ENCODE measurements at regions of chr12 and their contacts with region 1.

Region 1: GRCh38 chr12:30725739-30726138 is 29.0 kb downstream of the CAPRIN2 start:
- DNase-seq: peak; percentile 57
- H3K4me3 ChIP-seq: no peak overlapping the region
- H3K27ac ChIP-seq: no peak overlapping the region
- H3K4me1 ChIP-seq: no peaks in the 10 kb centered on the region
- H3K27me3 ChIP-seq: no peaks in the 10 kb centered on the region
- CTCF ChIP-seq: no peak

Region 2: DNA sequence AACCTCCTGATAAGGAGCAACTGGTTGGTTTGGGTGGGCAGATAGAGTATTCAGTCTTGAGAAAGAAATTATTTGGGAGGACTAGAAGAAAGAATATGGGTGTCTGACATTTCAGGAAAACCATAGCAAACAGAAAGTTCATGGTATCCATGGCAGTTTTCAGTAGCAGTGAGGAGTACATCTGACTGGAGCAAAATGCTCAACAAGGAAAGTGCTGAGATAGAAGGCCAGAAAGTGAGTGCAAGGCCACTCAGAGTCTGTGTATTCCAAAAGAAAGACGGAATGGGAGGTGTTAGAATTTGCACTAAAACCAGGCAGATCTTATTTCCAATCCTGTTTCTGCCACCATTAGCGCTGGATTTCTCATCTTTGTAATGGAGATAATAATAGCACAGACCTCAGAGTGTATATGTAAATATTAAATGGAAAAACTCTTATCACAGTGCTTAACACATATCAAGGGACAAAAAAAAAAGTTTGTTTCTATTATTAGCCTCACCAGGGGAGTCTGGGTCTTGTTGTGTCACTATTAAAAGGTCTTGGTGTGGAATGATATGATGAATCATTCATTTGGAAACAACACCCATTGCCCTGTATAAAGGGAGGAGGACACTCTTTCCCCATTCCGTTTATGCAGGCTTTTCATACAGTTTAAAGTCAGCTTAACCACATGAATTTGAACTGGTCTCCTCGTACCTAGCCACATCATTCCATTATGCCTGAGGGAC is 379.8 kb before region 1 on chr12:
- CTCF ChIA-PET with region 1: no interaction called
- dilution Hi-C with region 1: no loop called
- in situ Hi-C with region 1: no loop called
- intact Hi-C with region 1: no loop called
- DNase-seq: no peak
- H3K4me3 ChIP-seq: no peak overlapping the region
- H3K27ac ChIP-seq: no peak overlapping the region
- H3K4me1 ChIP-seq: no peaks in the 10 kb centered on the region
- H3K27me3 ChIP-seq: no peaks in the 10 kb centered on the region
- CTCF ChIP-seq: no peak

Region 3: DNA sequence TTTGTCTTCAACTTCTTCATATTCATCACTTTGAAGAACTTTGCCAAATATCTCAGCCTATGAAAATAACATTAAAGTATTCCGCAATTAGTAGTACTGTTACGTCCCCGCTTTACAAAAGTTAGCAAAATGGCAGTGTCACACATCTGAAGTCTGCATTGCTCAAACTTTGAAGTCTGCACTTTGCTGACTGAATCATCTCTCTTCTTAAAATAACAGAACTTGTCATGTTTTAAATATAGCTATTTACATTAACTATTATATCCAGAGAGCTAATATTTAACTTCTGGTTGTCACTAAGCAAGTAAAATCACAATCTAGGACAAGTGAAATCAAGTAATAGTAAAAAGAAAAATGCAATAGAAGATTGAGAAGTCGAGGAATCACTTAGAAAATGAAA is 64.5 kb before region 1 on chr12:
- CTCF ChIA-PET with region 1: no interaction called
- dilution Hi-C with region 1: no loop called
- in situ Hi-C with region 1: loop called in 1 of 2 experiments (anchors 10 kb)
- intact Hi-C with region 1: no loop called
- DNase-seq: no peak
- H3K4me3 ChIP-seq: no peak overlapping the region
- H3K27ac ChIP-seq: no peak overlapping the region
- H3K4me1 ChIP-seq: no peaks in the 10 kb centered on the region
- H3K27me3 ChIP-seq: no peaks in the 10 kb centered on the region
- CTCF ChIP-seq: no peak